ENCODE measurements at regions of chr6 and their contacts with region 1.

Region 1: GRCh38 chr6:27472617-27473400 is at the start of gene ZNF184:
- DNase-seq: peak; percentile 97
- H3K4me3 ChIP-seq: peak within 1 kb of the TSS; percentile 77
- H3K27ac ChIP-seq: peak within 1 kb of the TSS; percentile 98
- H3K4me1 ChIP-seq: peaks cover 3% of the 10 kb centered on the region
- H3K27me3 ChIP-seq: no peaks in the 10 kb centered on the region
- CTCF ChIP-seq: no peak
- total RNA-seq, gene ZNF184: 6.3 to 8.6 TPM

Region 2: GRCh38 chr6:27126815-27127537 is 345.8 kb before region 1 on chr6:
- intact Hi-C with region 1: loop called (anchors 10 kb)
- DNase-seq: peak; percentile 95
- H3K4me3 ChIP-seq: peak overlapping the region; percentile 5
- H3K27ac ChIP-seq: no peak overlapping the region
- H3K4me1 ChIP-seq: no peaks in the 10 kb centered on the region
- H3K27me3 ChIP-seq: no peaks in the 10 kb centered on the region
- CTCF ChIP-seq: peak; percentile 78

Region 3: DNA sequence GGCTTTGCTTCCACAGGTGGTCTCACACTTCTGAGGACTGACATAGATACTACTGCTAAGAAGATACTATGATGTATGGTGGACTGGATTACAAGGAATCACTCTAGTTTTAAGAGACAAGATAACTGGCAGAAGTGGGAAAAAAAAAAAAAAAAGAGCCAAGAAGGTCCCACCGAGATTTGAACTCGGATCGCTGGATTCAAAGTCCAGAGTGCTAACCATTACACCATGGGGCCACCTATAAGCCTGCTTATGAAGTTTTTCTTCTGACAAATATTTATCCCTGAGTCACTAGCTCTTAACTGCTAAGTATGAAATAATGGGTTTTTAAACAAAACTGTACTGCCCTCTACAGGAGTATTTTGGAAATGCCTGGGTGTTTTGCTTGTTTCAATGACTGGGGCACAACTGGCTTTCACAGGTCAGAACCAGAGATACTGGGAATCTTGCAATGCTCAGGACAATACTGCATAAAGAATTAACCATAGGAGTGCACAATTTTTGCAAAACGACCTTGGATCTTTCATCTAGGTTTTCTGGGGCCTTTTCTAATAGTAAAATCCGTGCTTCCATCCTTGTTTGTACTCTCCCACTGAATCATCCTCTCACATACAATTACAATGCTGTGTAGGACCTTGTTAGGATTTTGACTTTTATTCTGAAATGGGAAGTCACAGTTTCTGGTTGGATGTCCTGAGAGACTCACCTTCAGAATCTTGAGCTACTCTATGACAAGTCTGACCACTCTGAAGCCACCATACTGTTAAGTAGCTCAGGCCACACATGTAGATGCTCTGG is 323.1 kb after region 1 on chr6:
- intact Hi-C with region 1: no loop called
- DNase-seq: peak; percentile 88
- H3K4me3 ChIP-seq: no peak overlapping the region
- H3K27ac ChIP-seq: no peak overlapping the region
- H3K4me1 ChIP-seq: peaks cover 8% of the 10 kb centered on the region
- H3K27me3 ChIP-seq: no peaks in the 10 kb centered on the region
- CTCF ChIP-seq: peak; percentile 88